ENCODE measurements at regions of chr4 and their contacts with region 1.

Region 1: DNA sequence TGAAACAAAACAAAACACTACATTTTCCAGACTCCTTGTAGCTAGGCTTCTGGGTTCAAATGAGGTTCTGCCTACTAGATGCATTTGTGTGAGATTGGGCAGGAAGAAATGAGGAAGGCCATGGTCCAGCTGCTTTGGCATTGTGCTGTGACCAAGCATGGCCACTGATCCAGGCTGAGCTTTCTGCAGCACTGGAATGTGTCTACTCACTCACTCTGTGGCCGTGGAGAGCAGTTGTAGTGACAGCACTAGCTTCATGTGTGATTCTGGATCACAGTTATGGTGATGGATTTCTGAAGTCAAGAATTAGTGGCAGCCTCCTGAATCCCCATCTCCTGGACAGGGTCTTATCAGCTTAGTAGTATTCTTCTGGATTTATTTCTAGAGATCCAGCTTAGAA is 358.9 kb downstream of the GPAT3 start:
- DNase-seq: no peak
- ATAC-seq: no peak
- H3K4me3 ChIP-seq: no peak overlapping the region
- H3K4me3 Mint-ChIP-seq: no peak overlapping the region
- H3K27ac ChIP-seq: no peak overlapping the region
- H3K27ac Mint-ChIP-seq: no peak overlapping the region
- H3K4me1 ChIP-seq: no peaks in the 10 kb centered on the region
- H3K4me1 Mint-ChIP-seq: no peaks in the 10 kb centered on the region
- H3K27me3 ChIP-seq: no peaks in the 10 kb centered on the region
- H3K27me3 Mint-ChIP-seq: peaks cover 3% of the 10 kb centered on the region
- CTCF ChIP-seq: no peak

Region 2: GRCh38 chr4:84511703-84512102 is 616.9 kb after region 1 on chr4:
- CTCF ChIA-PET with region 1: no interaction called
- POLR2A ChIA-PET with region 1: no interaction called
- intact Hi-C with region 1: loop called in 1 of 2 experiments (anchors 5 kb)
- DNase-seq: no peak
- ATAC-seq: no peak
- H3K4me3 ChIP-seq: no peak overlapping the region
- H3K4me3 Mint-ChIP-seq: no peak overlapping the region
- H3K27ac ChIP-seq: no peak overlapping the region
- H3K27ac Mint-ChIP-seq: no peak overlapping the region
- H3K4me1 ChIP-seq: no peaks in the 10 kb centered on the region
- H3K4me1 Mint-ChIP-seq: no peaks in the 10 kb centered on the region
- H3K27me3 ChIP-seq: no peaks in the 10 kb centered on the region
- H3K27me3 Mint-ChIP-seq: peaks cover 37% of the 10 kb centered on the region
- CTCF ChIP-seq: no peak

Measured in CD8-positive, alpha-beta T cell (primary cell).